AG04449 (cell line): ENCODE measurements at regions of chr12 and their contacts with region 1.

Region 1: DNA sequence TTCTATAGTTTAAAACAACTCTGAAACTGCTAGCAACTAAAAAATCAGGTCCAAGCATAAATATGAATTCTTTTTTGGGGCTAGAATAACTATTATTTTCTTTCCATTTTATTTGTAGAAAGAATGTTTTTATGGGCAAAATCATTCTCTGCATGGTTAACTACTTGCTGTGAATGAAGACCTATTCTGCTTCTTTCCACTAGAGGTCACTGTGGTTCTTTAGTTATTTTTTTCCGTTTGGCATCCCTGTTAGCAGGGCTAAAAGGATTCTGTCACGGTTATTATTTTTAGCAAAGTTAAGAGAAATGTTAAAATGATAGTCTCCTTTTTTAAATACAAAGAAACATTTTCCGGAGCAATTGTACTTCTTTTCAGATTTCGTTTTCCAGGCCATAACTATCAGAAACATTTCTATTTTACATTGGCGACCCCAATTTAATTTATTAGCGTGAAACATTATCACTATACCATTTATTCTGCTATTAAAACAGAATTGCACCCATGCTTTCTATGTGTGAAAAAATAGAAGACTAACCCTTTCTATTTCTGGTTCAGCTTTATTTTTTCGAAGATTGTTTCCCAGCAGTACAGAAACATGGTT is 404.8 kb downstream of the ATP23 start:
- DNase-seq: no peak
- H3K4me3 ChIP-seq: no peak overlapping the region
- CTCF ChIP-seq: peak; percentile 29

Region 2: GRCh38 chr12:58359084-58359483 is 13.0 kb after region 1 on chr12:
- CTCF ChIA-PET with region 1: interaction called, 24 read pairs
- POLR2A ChIA-PET with region 1: no interaction called
- DNase-seq: no peak
- H3K4me3 ChIP-seq: no peak overlapping the region
- CTCF ChIP-seq: no peak